MCF 10A (cell line): ENCODE measurements at regions of chr1 and their contacts with region 1.

Region 1: GRCh38 chr1:171984850-171985485 is 143.7 kb downstream of the DNM3 start:
- DNase-seq: peak; percentile 52
- H3K4me3 Mint-ChIP-seq: no peak overlapping the region
- H3K27ac Mint-ChIP-seq: no peak overlapping the region
- H3K4me1 Mint-ChIP-seq: no peaks in the 10 kb centered on the region
- H3K27me3 Mint-ChIP-seq: no peaks in the 10 kb centered on the region
- CTCF ChIP-seq: peak; percentile 85

Region 2: GRCh38 chr1:171715813-171716251 is 269.1 kb before region 1 on chr1:
- CTCF ChIA-PET with region 1: interaction called, 15 read pairs
- POLR2A ChIA-PET with region 1: no interaction called
- intact Hi-C with region 1: loop called (anchors 2 kb)
- DNase-seq: peak; percentile 18
- H3K4me3 Mint-ChIP-seq: no peak overlapping the region
- H3K27ac Mint-ChIP-seq: no peak overlapping the region
- H3K4me1 Mint-ChIP-seq: peaks cover 6% of the 10 kb centered on the region
- H3K27me3 Mint-ChIP-seq: no peaks in the 10 kb centered on the region
- CTCF ChIP-seq: peak; percentile 44

Region 3: DNA sequence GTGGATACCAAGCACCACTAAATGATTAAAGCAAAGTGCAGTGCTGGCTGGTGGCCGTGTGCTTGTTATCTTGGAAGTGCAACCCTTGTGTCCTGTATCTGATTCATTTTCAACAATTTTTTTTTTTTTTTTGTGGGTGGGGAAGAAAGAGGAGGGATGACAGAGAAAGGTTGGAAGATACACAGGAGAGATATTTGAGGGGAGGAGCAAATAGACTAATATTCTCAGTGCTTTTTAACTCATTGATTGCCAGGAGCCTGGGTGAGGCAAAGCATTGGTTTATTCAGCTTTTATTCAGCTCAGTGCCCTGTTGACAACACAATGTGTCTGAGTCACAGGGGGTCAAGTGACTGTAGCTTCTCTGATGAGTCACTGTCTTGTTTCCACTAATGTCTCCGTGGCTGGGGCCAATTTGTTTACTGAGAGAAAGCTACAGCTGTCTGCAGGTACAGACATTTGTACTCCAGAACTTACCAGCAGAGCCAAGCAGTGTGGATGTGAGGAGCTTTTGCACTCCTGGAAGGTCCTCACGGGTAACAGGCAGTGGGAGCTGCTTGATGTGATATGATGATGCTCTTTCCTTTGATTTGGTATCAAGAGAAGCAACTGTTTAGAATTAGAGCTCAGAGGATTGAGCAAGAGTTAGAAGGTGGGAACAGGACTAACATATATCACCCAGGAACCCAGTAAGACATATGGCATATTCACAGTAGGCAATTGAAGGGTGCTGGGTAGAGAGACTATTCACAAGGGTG is 167.3 kb before region 1 on chr1:
- CTCF ChIA-PET with region 1: interaction called, 1,502 read pairs
- POLR2A ChIA-PET with region 1: interaction called, 3 read pairs
- intact Hi-C with region 1: no loop called
- DNase-seq: peak; percentile 94
- H3K4me3 Mint-ChIP-seq: peak overlapping the region; percentile 3
- H3K27ac Mint-ChIP-seq: peak overlapping the region; percentile 90
- H3K4me1 Mint-ChIP-seq: peaks cover 23% of the 10 kb centered on the region
- H3K27me3 Mint-ChIP-seq: no peaks in the 10 kb centered on the region
- CTCF ChIP-seq: no peak

Region 4: DNA sequence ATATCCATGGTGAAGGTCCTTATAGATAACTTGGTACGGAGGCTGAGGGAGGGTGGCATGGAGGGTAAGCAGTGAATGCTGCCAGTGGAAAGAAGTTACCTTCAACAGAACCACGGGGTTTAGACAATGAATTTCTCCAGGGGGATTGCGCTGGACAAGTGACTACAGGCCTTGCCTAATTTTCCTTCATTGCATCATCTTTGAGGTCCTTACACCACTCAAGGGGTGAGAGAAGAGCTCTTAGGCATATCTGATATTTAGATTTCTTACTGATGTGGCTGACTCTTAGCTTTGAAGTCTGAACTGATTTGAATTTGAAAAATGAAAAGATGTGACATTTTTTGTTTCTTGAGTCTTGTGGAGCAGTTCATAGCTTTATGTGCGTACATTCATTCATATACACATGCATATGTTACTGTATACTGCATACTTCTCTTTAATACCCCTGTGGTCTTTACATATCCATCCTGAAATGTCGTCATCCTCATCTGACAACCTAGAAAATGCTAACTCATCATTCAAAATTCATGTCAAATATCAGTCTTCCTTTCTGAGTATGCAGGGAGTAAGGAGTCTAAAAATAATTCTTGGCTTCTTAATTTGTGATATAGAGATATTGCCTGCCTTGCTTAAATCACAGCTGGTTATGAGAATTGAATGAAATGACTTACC is 80.1 kb before region 1 on chr1:
- CTCF ChIA-PET with region 1: interaction called, 39 read pairs
- POLR2A ChIA-PET with region 1: no interaction called
- intact Hi-C with region 1: no loop called
- DNase-seq: peak; percentile 29
- H3K4me3 Mint-ChIP-seq: no peak overlapping the region
- H3K27ac Mint-ChIP-seq: peak overlapping the region; percentile 13
- H3K4me1 Mint-ChIP-seq: peaks cover 13% of the 10 kb centered on the region
- H3K27me3 Mint-ChIP-seq: no peaks in the 10 kb centered on the region
- CTCF ChIP-seq: no peak

Region 5: GRCh38 chr1:172024516-172024915 is 39.5 kb after region 1 on chr1:
- CTCF ChIA-PET with region 1: interaction called, 15 read pairs
- POLR2A ChIA-PET with region 1: no interaction called
- intact Hi-C with region 1: no loop called
- DNase-seq: peak; percentile 81
- H3K4me3 Mint-ChIP-seq: no peak overlapping the region
- H3K27ac Mint-ChIP-seq: no peak overlapping the region
- H3K4me1 Mint-ChIP-seq: no peaks in the 10 kb centered on the region
- H3K27me3 Mint-ChIP-seq: no peaks in the 10 kb centered on the region
- CTCF ChIP-seq: no peak

Region 6: GRCh38 chr1:172443626-172444453 is 458.9 kb after region 1 on chr1 and contains the start of gene PIGC:
- CTCF ChIA-PET with region 1: interaction called, 11 read pairs
- POLR2A ChIA-PET with region 1: no interaction called
- intact Hi-C with region 1: no loop called
- DNase-seq: peak; percentile 93
- H3K4me3 Mint-ChIP-seq: peak within 1 kb of the TSS; percentile 85
- H3K27ac Mint-ChIP-seq: peak within 1 kb of the TSS; percentile 92
- H3K4me1 Mint-ChIP-seq: peaks cover 33% of the 10 kb centered on the region
- H3K27me3 Mint-ChIP-seq: no peaks in the 10 kb centered on the region
- CTCF ChIP-seq: peak; percentile 87
- total RNA-seq, gene PIGC: 20.2 and 23.1 TPM in 2 replicates